ENCODE measurements at regions of chr4 and their contacts with region 1.

Region 1: DNA sequence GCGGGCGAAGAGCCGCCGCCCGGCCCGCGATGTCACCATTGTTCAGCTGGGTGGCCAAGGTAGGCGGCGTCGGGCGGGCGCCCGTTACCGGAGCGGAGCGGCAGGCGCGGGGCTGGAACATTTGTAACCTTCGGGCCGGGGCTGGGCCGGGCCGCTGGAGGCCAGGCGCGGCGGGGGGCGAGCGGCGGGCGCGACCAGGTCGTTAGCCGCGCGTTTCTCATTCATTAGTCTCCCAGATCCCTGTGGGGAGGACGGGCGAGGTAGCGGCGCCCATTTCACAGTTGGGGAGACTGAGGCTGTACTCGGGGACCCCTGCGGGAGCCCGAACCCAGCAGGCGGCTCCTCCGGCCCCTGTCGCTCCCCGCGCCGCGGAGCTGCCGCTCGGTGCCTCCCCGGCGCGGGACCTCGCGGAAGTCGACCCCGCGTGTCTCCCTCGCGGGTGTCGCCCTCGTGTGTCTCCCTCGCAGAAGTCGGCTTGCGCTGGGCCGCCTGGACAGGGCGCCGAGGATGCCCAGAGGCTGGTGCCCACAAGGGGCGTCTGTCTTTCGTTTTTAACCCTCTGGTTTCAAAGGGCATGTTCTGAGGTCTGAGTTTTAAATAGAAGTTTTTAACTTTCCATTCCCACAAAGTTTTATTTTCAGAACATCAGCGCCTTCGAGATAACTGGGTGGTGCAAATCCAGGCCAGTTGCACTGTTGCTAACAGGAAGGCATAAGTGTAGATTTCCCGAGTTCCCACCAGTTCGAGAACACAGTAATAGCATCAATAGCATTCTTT is 17.5 kb downstream of the PTTG2 start:
- DNase-seq: peak; percentile 44 to 90
- H3K4me3 ChIP-seq: peak overlapping the region; percentile 76 to 99
- H3K27ac ChIP-seq: peak overlapping the region; percentile 97 to 99
- H3K4me1 ChIP-seq: peaks cover 4 to 26% of the 10 kb centered on the region in 2 donors
- H3K27me3 ChIP-seq: no peaks in the 10 kb centered on the region
- CTCF ChIP-seq: peak; percentile 76 to 86 (median 78)

Region 2: GRCh38 chr4:37826295-37827029 is 151.2 kb before region 1 on chr4 and contains the start of gene PGM2:
- intact Hi-C with region 1: loop called (anchors 5 kb)
- DNase-seq: peak; percentile 63 to 91
- H3K4me3 ChIP-seq: peak within 1 kb of the TSS; percentile 86 to 96
- H3K27ac ChIP-seq: peak within 1 kb of the TSS; percentile 86 to 90
- H3K4me1 ChIP-seq: peaks cover 2 to 16% of the 10 kb centered on the region in 2 donors
- H3K27me3 ChIP-seq: no peaks in the 10 kb centered on the region
- CTCF ChIP-seq: peak in 1 of 3 experiments; percentile 7
- total RNA-seq, gene PGM2: 7.1 TPM

Region 3: DNA sequence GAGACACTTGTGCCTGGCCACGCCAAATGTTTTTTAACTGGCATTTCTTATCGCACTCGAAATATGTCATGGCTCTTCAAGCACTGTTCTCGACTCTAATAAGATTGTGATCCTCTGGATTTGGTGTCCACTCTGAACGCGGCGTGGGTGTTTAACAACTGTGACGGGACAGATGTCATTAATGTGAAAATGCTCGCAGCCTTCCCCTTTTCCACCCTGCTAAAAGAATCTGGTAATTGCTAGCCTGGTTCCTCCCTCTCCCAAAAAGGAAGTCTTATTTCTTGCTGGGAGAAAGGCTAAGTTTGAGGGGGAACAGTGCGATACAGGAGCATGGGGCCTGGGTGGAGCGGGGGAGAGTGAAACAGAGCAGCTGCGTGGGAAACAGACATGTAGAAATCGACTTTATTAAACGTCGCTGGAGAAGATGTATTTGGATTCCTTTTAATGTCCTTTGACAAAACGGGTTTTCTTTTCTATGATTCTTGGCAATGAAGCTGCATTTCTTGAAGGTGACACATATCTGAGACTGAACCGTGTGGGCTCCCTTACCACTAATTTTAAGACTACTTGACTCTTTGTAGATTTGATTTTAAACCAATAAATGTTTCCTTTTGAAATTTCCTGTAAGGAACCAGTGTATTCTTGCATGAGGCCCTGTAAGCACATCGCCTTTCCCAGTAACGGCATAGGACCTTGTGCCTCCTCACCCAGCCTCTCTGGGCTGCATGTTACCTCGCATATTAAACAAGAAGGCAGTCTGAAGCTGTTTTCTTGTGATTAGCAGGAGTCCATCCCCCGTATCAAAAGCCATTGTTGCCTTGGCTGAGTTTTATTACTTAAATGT is 68.9 kb before region 1 on chr4:
- intact Hi-C with region 1: loop called (anchors 5 kb)
- DNase-seq: no peak
- H3K4me3 ChIP-seq: peak overlapping the region; percentile 34 to 54
- H3K27ac ChIP-seq: peak overlapping the region; percentile 82 to 85
- H3K4me1 ChIP-seq: peaks cover 0 to 19% of the 10 kb centered on the region in 2 donors
- H3K27me3 ChIP-seq: no peaks in the 10 kb centered on the region
- CTCF ChIP-seq: no peak

Region 4: GRCh38 chr4:38119668-38120385 is 142.2 kb after region 1 on chr4:
- intact Hi-C with region 1: no loop called
- DNase-seq: no peak
- H3K4me3 ChIP-seq: no peak overlapping the region
- H3K27ac ChIP-seq: peak overlapping the region in 1 of 2 donors; percentile 13
- H3K4me1 ChIP-seq: no peaks in the 10 kb centered on the region
- H3K27me3 ChIP-seq: no peaks in the 10 kb centered on the region
- CTCF ChIP-seq: no peak

Measured in ascending aorta (tissue), 2 donors.